Gastrocnemius medialis (tissue), 4 donors: ENCODE measurements at regions of chr12 and their contacts with region 1.

Region 1: GRCh38 chr12:11648831-11649702 is at the start of gene ETV6:
- DNase-seq: peak; percentile 60 to 61
- ATAC-seq: peak; percentile 80 to 81
- H3K4me3 ChIP-seq: peak within 1 kb of the TSS; percentile 92 to 96 (median 92)
- H3K27ac ChIP-seq: peak within 1 kb of the TSS; percentile 84 to 97 (median 92)
- H3K4me1 ChIP-seq: peaks cover 32 to 37% of the 10 kb centered on the region in 2 donors
- H3K27me3 ChIP-seq: no peaks in the 10 kb centered on the region
- CTCF ChIP-seq: peak in 1 of 5 experiments; percentile 16
- POLR2A ChIP-seq: peak; percentile 47 to 71
- total RNA-seq, gene ETV6: 2.8 to 5.9 (median 3.3) TPM

Region 2: DNA sequence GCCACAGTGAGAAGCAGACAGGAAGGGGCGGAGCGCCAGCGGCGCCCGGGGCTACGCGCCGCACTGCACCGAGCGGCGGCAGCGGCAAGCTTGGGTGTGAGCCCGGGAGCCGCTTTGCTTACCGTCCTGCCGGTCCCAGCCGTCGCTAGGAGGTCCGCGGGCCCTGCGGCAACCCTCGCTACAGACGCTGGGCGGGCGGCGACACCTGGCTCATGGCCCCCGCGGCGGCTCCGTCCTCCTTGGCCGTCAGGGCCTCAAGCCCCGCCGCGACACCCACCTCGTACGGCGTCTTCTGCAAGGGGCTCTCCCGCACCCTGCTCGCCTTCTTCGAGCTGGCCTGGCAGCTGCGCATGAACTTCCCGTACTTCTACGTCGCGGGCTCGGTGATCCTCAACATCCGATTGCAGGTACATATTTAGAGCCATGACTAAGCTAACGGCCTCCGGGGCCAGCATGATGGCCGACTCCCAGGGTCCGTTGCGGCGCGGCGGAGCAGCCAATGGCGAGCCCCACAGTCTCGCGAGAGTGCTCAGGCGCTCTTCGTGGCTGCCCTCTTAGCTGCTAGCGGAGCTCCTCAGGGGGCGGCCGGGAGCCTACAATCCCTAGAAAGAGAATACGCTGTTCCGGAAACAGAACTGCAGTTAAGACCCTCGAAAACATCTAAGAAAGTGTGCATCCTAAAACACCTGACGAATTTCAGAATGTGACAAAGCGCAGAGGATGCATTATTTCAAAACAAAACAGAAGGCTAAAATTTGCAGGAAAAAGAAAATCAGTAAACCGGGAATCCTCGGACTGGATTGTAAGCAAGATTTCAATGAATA is 477.7 kb before region 1 on chr12 and contains the start of gene SMIM10L1:
- in situ Hi-C with region 1: no loop called
- intact Hi-C with region 1: loop called (anchors 10 kb)
- DNase-seq: peak; percentile 89 to 94
- ATAC-seq: peak; percentile 97 to 98
- H3K4me3 ChIP-seq: peak within 1 kb of the TSS; percentile 80 to 90 (median 82)
- H3K27ac ChIP-seq: peak within 1 kb of the TSS; percentile 92 to 97 (median 96)
- H3K4me1 ChIP-seq: peaks cover 34 to 44% of the 10 kb centered on the region in 2 donors
- H3K27me3 ChIP-seq: peaks cover 0 to 2% (median 0%) of the 10 kb centered on the region in 3 donors
- CTCF ChIP-seq: peak in 1 of 5 experiments; percentile 15
- POLR2A ChIP-seq: peak; percentile 75 to 80
- total RNA-seq, gene SMIM10L1: 13.4 to 20.7 (median 16.2) TPM

Region 3: GRCh38 chr12:11719678-11720099 is 70.6 kb after region 1 on chr12:
- in situ Hi-C with region 1: no loop called
- intact Hi-C with region 1: loop called (anchors 5 kb)
- DNase-seq: no peak
- ATAC-seq: no peak
- H3K4me3 ChIP-seq: no peak overlapping the region
- H3K27ac ChIP-seq: no peak overlapping the region
- H3K4me1 ChIP-seq: peaks cover 19 to 25% of the 10 kb centered on the region in 2 donors
- H3K27me3 ChIP-seq: no peaks in the 10 kb centered on the region
- CTCF ChIP-seq: no peak
- POLR2A ChIP-seq: no peak

Region 4: DNA sequence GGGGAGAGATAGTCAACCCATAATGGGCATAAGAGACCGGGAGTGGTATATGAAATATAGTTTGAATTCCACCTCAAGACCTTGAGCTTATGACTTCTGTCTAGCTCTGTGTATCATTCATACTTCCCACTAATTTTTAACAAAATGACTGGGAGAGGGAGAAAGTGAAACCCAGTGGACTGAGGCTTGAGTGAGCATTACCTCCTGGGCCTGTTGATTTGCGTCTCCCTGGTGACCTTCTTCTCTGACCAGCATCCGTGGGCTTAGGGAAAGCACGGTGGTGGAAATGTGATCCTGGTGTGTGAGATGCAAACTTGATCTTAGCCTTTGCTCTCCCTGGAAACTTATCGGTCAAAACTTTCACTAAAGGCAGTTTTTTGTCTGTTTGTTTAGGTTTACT is 213.7 kb after region 1 on chr12:
- in situ Hi-C with region 1: loop called in 1 of 4 experiments (anchors 10 kb)
- intact Hi-C with region 1: no loop called
- DNase-seq: no peak
- ATAC-seq: peak; percentile 35 to 79
- H3K4me3 ChIP-seq: no peak overlapping the region
- H3K27ac ChIP-seq: peak overlapping the region; percentile 63 to 81 (median 76)
- H3K4me1 ChIP-seq: peaks cover 26 to 37% of the 10 kb centered on the region in 2 donors
- H3K27me3 ChIP-seq: no peaks in the 10 kb centered on the region
- CTCF ChIP-seq: no peak
- POLR2A ChIP-seq: no peak

Region 5: DNA sequence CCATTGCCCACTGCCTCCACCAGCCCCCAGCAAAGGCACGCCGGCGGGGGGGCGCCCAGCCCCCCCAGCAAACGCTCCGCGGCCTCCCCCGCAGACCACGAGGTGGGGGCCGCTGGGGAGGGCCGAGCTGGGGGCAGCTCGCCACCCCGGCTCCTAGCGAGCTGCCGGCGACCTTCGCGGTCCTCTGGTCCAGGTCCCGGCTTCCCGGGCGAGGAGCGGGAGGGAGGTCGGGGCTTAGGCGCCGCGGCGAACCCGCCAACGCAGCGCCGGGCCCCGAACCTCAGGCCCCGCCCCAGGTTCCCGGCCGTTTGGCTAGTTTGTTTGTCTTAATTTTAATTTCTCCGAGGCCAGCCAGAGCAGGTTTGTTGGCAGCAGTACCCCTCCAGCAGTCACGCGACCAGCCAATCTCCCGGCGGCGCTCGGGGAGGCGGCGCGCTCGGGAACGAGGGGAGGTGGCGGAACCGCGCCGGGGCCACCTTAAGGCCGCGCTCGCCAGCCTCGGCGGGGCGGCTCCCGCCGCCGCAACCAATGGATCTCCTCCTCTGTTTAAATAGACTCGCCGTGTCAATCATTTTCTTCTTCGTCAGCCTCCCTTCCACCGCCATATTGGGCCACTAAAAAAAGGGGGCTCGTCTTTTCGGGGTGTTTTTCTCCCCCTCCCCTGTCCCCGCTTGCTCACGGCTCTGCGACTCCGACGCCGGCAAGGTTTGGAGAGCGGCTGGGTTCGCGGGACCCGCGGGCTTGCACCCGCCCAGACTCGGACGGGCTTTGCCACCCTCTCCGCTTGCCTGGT is 1067.9 kb after region 1 on chr12 and contains the start of gene CDKN1B:
- in situ Hi-C with region 1: no loop called
- intact Hi-C with region 1: loop called (anchors 5 kb)
- DNase-seq: peak; percentile 86 to 91
- ATAC-seq: peak; percentile 84 to 86
- H3K4me3 ChIP-seq: peak within 1 kb of the TSS; percentile 72 to 99 (median 92)
- H3K27ac ChIP-seq: peak within 1 kb of the TSS; percentile 96 to 99 (median 98)
- H3K4me1 ChIP-seq: peaks cover 50 to 60% of the 10 kb centered on the region in 2 donors
- H3K27me3 ChIP-seq: no peaks in the 10 kb centered on the region
- CTCF ChIP-seq: peak in 1 of 5 experiments; percentile 5
- POLR2A ChIP-seq: peak; percentile 81 to 92
- total RNA-seq, gene CDKN1B: 43.6 to 76.4 (median 56.6) TPM